AG04449 (cell line): ENCODE measurements at regions of chr18 and their contacts with region 1.

Region 1: DNA sequence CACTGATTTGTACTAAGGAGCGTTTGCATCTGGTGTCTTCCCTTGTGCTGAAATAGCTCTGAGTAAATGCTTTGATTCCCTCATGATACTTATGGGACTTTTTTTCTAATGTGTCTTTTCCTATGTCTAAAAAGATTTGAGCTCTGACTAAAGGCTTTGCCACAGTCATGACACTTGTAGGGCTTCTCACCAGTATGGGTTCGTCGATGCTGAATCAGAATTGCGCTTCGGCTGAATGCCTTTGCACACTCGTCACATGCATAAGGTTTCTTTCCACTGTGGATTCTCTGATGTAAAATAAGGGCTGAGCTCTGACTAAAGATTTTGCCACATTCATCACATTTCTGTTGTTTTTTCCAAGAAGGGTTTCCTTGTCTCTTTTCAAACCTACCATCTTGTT is 8.0 kb downstream of the ZNF396 start:
- DNase-seq: no peak
- H3K4me3 ChIP-seq: no peak overlapping the region
- CTCF ChIP-seq: no peak

Region 2: GRCh38 chr18:35185771-35186170 is 183.4 kb before region 1 on chr18:
- CTCF ChIA-PET with region 1: no interaction called
- POLR2A ChIA-PET with region 1: no interaction called
- DNase-seq: no peak
- H3K4me3 ChIP-seq: no peak overlapping the region
- CTCF ChIP-seq: no peak

Region 3: DNA sequence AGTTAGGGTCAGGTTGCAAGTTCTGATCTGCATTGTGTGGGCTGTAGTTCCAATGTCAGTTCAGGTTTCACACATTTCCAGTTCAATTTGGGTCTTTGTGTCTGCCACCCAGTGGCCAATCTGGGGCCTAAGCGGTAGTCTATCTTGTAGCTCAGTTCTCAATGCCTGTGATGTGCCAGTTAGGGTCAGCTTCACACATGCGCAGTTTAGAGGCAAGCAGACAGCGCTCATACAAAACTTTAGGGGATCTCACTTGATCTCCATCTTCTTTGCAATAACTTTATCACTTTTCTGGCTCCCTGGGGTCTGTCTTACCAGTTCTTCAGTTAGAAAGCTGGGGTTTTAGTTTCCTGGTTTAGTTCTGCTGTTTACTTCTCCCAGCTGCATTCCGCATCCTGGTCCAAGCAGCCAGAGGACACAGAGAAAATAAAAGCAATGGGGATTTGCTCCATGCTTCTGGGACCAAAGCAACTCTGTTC is 13.9 kb before region 1 on chr18:
- CTCF ChIA-PET with region 1: interaction called, 11 read pairs
- POLR2A ChIA-PET with region 1: no interaction called
- DNase-seq: peak; percentile 36
- H3K4me3 ChIP-seq: no peak overlapping the region
- CTCF ChIP-seq: peak; percentile 79

Region 4: GRCh38 chr18:35386600-35387351 is 17.6 kb after region 1 on chr18:
- CTCF ChIA-PET with region 1: interaction called, 45 read pairs
- POLR2A ChIA-PET with region 1: no interaction called
- DNase-seq: no peak
- H3K4me3 ChIP-seq: no peak overlapping the region
- CTCF ChIP-seq: peak; percentile 75